ENCODE measurements at regions of chr4 and their contacts with region 1.

Region 1: GRCh38 chr4:38889143-38889542 is 21.5 kb downstream of the FAM114A1 start:
- DNase-seq: no peak
- H3K4me3 ChIP-seq: no peak overlapping the region
- H3K27ac ChIP-seq: no peak overlapping the region
- H3K4me1 ChIP-seq: no peaks in the 10 kb centered on the region; a peak in 1 of 7 replicates
- H3K27me3 ChIP-seq: no peaks in the 10 kb centered on the region
- CTCF ChIP-seq: no peak
- EP300 ChIP-seq: no peak
- POLR2A ChIP-seq: no peak
- RAD21 ChIP-seq: no peak

Region 2: DNA sequence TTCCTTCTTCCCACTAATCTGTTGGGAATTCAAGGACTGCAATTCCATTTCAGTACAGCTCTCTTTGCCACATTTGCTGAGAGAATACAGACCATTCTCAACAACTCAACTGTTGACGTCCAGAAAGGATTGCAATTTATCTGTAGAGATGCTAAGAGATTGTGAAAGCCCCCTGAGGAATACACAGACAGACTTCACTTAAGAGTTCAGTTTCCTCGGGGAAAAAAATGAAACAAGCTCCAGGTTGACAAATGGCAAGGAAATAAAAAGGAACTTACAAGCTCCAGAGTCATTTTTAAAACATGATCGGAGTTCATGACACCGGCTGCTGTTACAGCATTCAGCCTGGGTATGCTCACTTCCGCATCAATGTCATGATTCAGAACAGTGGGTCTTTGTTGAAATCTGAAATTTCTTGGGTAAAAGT is 120.2 kb before region 1 on chr4:
- CTCF ChIA-PET with region 1: no interaction called
- POLR2A ChIA-PET with region 1: no interaction called
- DNase-seq: no peak
- H3K4me3 ChIP-seq: no peak overlapping the region
- H3K27ac ChIP-seq: no peak overlapping the region
- H3K4me1 ChIP-seq: no peaks in the 10 kb centered on the region
- H3K27me3 ChIP-seq: no peaks in the 10 kb centered on the region
- CTCF ChIP-seq: no peak
- EP300 ChIP-seq: no peak
- POLR2A ChIP-seq: no peak
- RAD21 ChIP-seq: no peak

Region 3: GRCh38 chr4:38872604-38873006 is 16.5 kb before region 1 on chr4:
- CTCF ChIA-PET with region 1: interaction called, 11 read pairs
- POLR2A ChIA-PET with region 1: no interaction called
- DNase-seq: no peak
- H3K4me3 ChIP-seq: no peak overlapping the region
- H3K27ac ChIP-seq: no peak overlapping the region
- H3K4me1 ChIP-seq: peaks cover 3 to 7% (median 5%) of the 10 kb centered on the region in 4 experiments; a peak in 6 of 7 replicates
- H3K27me3 ChIP-seq: peaks cover 0 to 4% (median 0%) of the 10 kb centered on the region in 4 experiments; a peak in 2 of 7 replicates
- CTCF ChIP-seq: no peak
- EP300 ChIP-seq: no peak
- POLR2A ChIP-seq: no peak
- RAD21 ChIP-seq: no peak

Region 4: DNA sequence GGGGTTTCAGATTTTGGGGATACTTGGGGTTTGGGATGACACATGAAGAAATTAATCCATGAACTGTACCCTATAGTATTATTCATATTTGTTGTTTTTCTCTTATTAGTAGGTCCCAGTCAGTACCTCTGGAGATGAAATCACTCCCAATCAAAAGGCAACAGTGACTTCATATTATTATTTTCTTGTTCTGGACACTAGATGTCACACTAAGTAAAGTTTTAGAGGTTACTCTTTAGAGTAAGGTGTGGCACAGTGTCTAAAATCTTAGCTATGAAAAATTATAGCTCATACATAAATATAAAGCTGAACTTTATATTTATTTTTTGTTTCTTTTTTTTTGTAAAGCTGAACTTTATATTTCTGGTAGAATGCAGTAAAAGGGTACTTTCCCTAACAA is 13.6 kb after region 1 on chr4:
- CTCF ChIA-PET with region 1: interaction called, 22 read pairs
- POLR2A ChIA-PET with region 1: no interaction called
- DNase-seq: no peak
- H3K4me3 ChIP-seq: no peak overlapping the region
- H3K27ac ChIP-seq: no peak overlapping the region
- H3K4me1 ChIP-seq: no peaks in the 10 kb centered on the region
- H3K27me3 ChIP-seq: no peaks in the 10 kb centered on the region
- CTCF ChIP-seq: peak in 2 of 3 experiments; percentile 4 to 10; a peak in 2 of 4 replicates
- EP300 ChIP-seq: no peak
- POLR2A ChIP-seq: no peak
- RAD21 ChIP-seq: peak; percentile 48 to 55

Region 5: DNA sequence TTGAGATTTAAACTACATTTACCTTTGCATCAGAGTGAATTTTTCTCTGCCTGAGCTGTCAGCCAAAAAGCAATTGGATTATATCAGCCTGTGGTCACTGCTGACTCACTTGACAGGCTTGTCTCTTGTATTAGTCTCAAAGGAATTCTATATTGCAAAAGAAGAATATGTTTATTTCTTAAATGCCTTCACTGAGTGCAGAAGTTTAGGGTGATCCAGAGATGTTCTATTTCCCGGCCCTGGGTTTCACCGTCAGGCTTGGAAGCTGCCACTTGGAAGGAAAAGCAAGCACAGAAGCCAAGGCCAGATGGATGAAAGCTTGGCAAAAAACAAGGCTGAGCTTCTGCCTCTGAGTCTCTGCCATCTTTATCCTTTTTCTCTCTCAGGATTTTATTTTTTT is 59.4 kb after region 1 on chr4:
- CTCF ChIA-PET with region 1: no interaction called
- POLR2A ChIA-PET with region 1: no interaction called
- DNase-seq: no peak
- H3K4me3 ChIP-seq: no peak overlapping the region
- H3K27ac ChIP-seq: no peak overlapping the region
- H3K4me1 ChIP-seq: no peaks in the 10 kb centered on the region
- H3K27me3 ChIP-seq: no peaks in the 10 kb centered on the region
- CTCF ChIP-seq: no peak
- EP300 ChIP-seq: no peak
- POLR2A ChIP-seq: no peak
- RAD21 ChIP-seq: no peak

Region 6: GRCh38 chr4:38980903-38981676 is 91.9 kb after region 1 on chr4:
- CTCF ChIA-PET with region 1: no interaction called
- POLR2A ChIA-PET with region 1: no interaction called
- DNase-seq: no peak
- H3K4me3 ChIP-seq: no peak overlapping the region
- H3K27ac ChIP-seq: no peak overlapping the region
- H3K4me1 ChIP-seq: no peaks in the 10 kb centered on the region; a peak in 1 of 7 replicates
- H3K27me3 ChIP-seq: no peaks in the 10 kb centered on the region
- CTCF ChIP-seq: no peak
- EP300 ChIP-seq: no peak
- POLR2A ChIP-seq: no peak
- RAD21 ChIP-seq: no peak